Activated CD4-positive, alpha-beta memory T cell treated with anti-CD3 and anti-CD28 coated beads for 36 hours (primary cell): ENCODE measurements at regions of chr14 and their contacts with region 1.

Region 1: DNA sequence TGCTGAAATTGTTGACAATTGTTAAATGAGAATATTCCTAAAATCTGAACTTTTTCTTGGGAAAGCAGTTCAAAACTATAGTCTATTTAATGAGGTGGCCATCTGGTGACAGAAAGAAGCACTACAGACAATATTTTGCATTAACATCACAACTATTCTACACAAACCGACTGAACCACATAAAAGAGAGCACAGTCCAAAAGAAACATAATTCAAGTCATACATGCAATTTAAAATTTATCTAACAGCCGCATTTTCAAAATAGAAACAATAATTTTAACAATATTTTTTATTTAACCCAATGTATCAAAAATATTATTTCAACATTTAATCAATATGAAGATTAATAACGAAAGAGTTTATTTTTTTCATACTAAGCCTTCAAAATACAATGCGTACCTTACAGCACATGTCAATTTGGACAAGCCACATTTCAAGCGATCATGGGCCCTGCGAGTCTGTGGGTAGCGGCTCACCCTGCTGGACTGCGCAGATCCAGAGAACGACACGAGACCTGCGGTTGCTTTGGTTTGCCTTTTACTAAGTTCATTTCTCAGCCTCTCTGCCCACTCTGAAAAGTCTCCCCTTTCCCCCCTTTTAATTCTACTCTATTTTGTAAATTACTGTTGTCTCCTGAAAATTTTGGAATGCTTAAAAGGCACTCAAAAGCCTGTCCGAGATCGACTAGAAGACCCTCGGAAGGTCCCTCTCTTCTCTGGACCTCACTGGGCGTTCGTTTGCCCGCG is 947 bp upstream of the LRRC9 start:
- DNase-seq: peak; percentile 22
- H3K4me3 Mint-ChIP-seq: peak overlapping the region; percentile 45
- H3K27ac Mint-ChIP-seq: no peak overlapping the region
- H3K4me1 Mint-ChIP-seq: peaks cover 2% of the 10 kb centered on the region
- H3K27me3 Mint-ChIP-seq: peaks cover 41% of the 10 kb centered on the region

Region 2: DNA sequence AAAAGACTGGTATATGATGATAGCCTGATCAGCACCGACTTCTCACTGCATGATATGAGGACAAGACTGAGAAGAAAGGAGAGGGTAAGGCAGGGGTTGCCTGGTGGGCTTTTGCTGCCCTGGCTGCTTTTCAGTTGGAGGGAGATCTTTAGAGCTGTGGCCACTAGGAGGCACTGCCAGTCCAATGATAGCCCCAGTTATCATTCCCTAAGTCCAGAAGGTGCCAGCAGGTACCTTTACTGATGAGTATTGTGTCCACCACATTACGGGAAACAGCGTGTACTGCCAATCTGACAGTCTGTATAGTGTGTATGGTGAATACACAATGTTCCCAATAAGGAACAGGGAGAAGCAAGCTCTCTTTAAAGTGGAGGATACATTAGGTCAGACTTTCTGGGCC is 286.6 kb before region 1 on chr14:
- CTCF ChIA-PET with region 1: interaction called, 6 read pairs
- POLR2A ChIA-PET with region 1: no interaction called
- intact Hi-C with region 1: loop called (anchors 1 kb)
- DNase-seq: peak; percentile 37
- H3K4me3 Mint-ChIP-seq: no peak overlapping the region
- H3K27ac Mint-ChIP-seq: no peak overlapping the region
- H3K4me1 Mint-ChIP-seq: peaks cover 3% of the 10 kb centered on the region
- H3K27me3 Mint-ChIP-seq: peaks cover 48% of the 10 kb centered on the region